AG04450 (cell line): ENCODE measurements at regions of chr10 and their contacts with region 1.

Region 1: GRCh38 chr10:73413528-73414229 is at the start of gene ANXA7:
- DNase-seq: peak; percentile 32
- H3K4me3 ChIP-seq: peak within 1 kb of the TSS; percentile 80
- H3K27ac ChIP-seq: peak within 1 kb of the TSS; percentile 94
- H3K27me3 ChIP-seq: no peaks in the 10 kb centered on the region
- CTCF ChIP-seq: peak; percentile 29
- polyA plus RNA-seq, gene ANXA7: 117 TPM in 2 replicates

Region 2: DNA sequence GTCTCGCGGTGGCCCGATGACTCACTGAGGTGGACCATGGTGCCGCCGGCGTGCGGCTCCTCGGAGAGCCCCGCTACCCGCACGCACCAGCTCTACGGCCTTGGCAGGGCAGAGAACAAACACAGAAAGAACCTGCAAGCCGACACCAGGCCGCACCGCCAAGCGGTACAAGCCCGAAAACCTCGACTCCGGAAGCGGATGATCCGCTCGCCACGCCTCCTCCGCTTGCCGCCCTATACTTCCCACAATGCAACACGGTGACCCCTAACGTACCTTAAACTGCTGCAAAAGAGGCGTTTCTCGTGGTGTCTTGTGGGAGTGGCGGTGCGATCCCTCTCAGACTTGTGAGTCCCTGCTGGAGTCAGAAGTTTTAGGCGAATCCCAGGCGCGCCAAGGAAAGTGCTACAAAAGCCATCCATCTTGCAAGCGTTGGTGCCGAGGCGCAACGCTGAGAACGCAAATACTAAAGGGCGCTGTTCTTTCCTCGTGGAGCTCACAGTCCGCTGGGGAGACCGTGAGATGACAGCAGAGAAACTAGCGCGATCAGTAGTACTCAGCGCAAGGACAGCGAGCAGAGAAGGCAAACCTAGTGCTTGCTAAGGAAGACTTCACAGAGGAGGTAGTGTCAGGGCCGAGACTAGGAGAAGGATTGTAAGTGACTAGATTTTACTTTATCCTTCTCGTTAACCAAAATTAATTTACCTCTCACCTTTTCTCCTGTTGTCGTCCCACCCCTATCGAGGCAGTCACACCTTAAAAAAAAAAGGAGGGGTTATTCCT is 161.0 kb before region 1 on chr10 and contains the start of gene MRPS16:
- CTCF ChIA-PET with region 1: no interaction called
- POLR2A ChIA-PET with region 1: interaction called, 14 read pairs
- DNase-seq: peak; percentile 89
- H3K4me3 ChIP-seq: peak within 1 kb of the TSS; percentile 99
- H3K27ac ChIP-seq: peak within 1 kb of the TSS; percentile 89
- H3K27me3 ChIP-seq: no peaks in the 10 kb centered on the region
- CTCF ChIP-seq: no peak
- polyA plus RNA-seq, gene MRPS16: 67.7 and 77.8 TPM in 2 replicates

Region 3: DNA sequence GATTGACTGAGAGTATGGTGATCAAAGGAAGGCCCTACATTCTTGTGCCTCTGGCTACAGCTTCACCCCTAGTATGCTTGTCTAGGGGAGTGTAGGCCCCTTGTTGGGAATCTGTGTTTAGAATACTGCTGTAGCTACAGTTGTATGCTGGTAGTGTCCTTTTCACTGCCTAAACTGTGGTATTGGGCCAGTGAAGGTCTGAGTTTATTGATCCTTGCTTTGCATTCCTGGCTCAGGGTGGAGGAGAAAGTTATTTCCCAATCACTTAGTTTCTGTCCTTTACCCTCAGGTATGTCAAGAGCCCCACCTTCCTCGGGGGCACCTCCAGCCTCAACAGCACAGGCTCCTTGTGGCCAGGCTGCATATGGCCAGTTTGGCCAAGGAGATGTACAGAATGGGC is 337.1 kb after region 1 on chr10:
- CTCF ChIA-PET with region 1: no interaction called
- POLR2A ChIA-PET with region 1: no interaction called
- DNase-seq: no peak
- H3K4me3 ChIP-seq: no peak overlapping the region
- H3K27ac ChIP-seq: no peak overlapping the region
- H3K27me3 ChIP-seq: no peaks in the 10 kb centered on the region
- CTCF ChIP-seq: no peak